ENCODE measurements at regions of chr1 and their contacts with region 1.

Region 1: GRCh38 chr1:15595809-15596617 is 11.2 kb upstream of the AGMAT start:
- DNase-seq: no peak
- H3K4me3 ChIP-seq: no peak overlapping the region
- H3K27me3 ChIP-seq: peaks cover 3% of the 10 kb centered on the region
- CTCF ChIP-seq: no peak

Region 2: DNA sequence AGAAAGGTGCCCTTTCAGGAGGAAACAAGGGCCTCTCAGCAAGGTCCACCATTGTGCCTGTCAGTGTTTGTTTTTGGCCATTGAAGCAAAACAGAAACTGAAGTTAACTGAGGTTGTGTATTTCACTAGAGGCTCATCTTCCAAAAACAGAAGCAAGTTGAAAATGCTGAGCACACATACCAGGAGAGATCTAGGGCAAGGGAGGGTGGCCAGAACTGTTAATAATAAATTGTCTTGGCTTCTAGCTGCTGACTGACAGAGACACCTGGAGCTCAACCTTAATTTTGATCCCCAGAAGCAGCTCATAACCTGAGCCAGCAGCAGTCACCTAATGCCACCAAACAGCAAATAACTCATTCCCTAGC is 16.3 kb before region 1 on chr1:
- CTCF ChIA-PET with region 1: interaction called, 13 read pairs
- POLR2A ChIA-PET with region 1: interaction called, 32 read pairs
- DNase-seq: no peak
- H3K4me3 ChIP-seq: no peak overlapping the region
- H3K27me3 ChIP-seq: no peaks in the 10 kb centered on the region
- CTCF ChIP-seq: no peak

Region 3: GRCh38 chr1:15624133-15624714 is 28.2 kb after region 1 on chr1:
- CTCF ChIA-PET with region 1: no interaction called
- POLR2A ChIA-PET with region 1: no interaction called
- DNase-seq: no peak
- H3K4me3 ChIP-seq: no peak overlapping the region
- H3K27me3 ChIP-seq: no peaks in the 10 kb centered on the region
- CTCF ChIP-seq: no peak

Region 4: DNA sequence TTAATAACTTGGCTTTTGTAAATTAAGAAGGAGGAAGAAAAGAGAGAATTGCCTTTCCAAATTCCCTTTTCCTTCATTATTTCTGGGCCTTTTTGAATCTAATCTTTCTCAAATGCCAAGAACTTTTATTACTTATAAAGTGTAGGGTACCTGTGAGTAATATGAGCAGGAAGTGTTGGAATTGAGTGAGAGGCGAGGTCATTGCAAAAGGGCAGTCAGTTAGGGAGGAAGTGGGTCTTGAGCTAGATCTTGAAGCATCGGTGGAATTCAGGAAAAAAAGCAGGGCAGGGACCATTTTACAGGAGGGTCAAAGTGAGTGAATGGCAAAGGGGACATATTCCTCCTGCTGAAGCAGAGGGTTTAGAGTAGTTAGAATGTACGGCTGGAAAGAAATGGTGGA is 44.7 kb after region 1 on chr1:
- CTCF ChIA-PET with region 1: no interaction called
- POLR2A ChIA-PET with region 1: no interaction called
- DNase-seq: no peak
- H3K4me3 ChIP-seq: no peak overlapping the region
- H3K27me3 ChIP-seq: no peaks in the 10 kb centered on the region
- CTCF ChIP-seq: no peak

Region 5: GRCh38 chr1:15749399-15750291 is 153.6 kb after region 1 on chr1:
- CTCF ChIA-PET with region 1: no interaction called
- POLR2A ChIA-PET with region 1: no interaction called
- DNase-seq: no peak
- H3K4me3 ChIP-seq: no peak overlapping the region
- H3K27me3 ChIP-seq: no peaks in the 10 kb centered on the region
- CTCF ChIP-seq: no peak